A549 (cell line): ENCODE measurements at regions of chr4 and their contacts with region 1.

Region 1: GRCh38 chr4:6640292-6641163 is at the start of gene MRFAP1:
- DNase-seq: peak; percentile 80 to 95
- ATAC-seq: peak; percentile 93 to 94
- H3K4me3 ChIP-seq: peak within 1 kb of the TSS; percentile 62
- H3K27ac ChIP-seq: peak within 1 kb of the TSS; percentile 87 to 98
- H3K4me1 ChIP-seq: peaks cover 10% of the 10 kb centered on the region
- CTCF ChIP-seq: no peak
- EP300 ChIP-seq: no peak
- POLR2A ChIP-seq: peak; percentile 92
- RAD21 ChIP-seq: no peak
- polyA plus RNA-seq, gene MRFAP1: 185 and 272 TPM in 2 replicates

Region 2: GRCh38 chr4:6663596-6664393 is 23.3 kb after region 1 on chr4:
- CTCF ChIA-PET with region 1: interaction called, 4 read pairs
- POLR2A ChIA-PET with region 1: interaction called, 13 read pairs
- DNase-seq: no peak
- ATAC-seq: peak in 1 of 2 experiments; percentile 14; a peak in 2 of 6 replicates
- H3K4me3 ChIP-seq: peak overlapping the region; percentile 38; the same call in 2 of the 3 replicates
- H3K27ac ChIP-seq: peak overlapping the region; percentile 27 to 59; a peak in 3 of 6 replicates
- H3K4me1 ChIP-seq: peaks cover 7% of the 10 kb centered on the region; the same call in 2 of the 3 replicates
- CTCF ChIP-seq: no peak
- EP300 ChIP-seq: no peak
- POLR2A ChIP-seq: no peak
- RAD21 ChIP-seq: no peak

Region 3: GRCh38 chr4:6815029-6815836 is 174.7 kb after region 1 on chr4:
- CTCF ChIA-PET with region 1: no interaction called
- POLR2A ChIA-PET with region 1: no interaction called
- DNase-seq: no peak
- ATAC-seq: no peak
- H3K4me3 ChIP-seq: no peak overlapping the region
- H3K27ac ChIP-seq: no peak overlapping the region
- H3K4me1 ChIP-seq: no peaks in the 10 kb centered on the region
- CTCF ChIP-seq: no peak
- EP300 ChIP-seq: no peak
- POLR2A ChIP-seq: no peak
- RAD21 ChIP-seq: no peak